Activated CD4-positive, alpha-beta T cell treated with anti-CD3 and anti-CD28 coated beads for 36 hours (primary cell): ENCODE measurements at regions of chr4 and their contacts with region 1.

Region 1: GRCh38 chr4:184250795-184251669 is 33.4 kb upstream of the ENPP6 start:
- DNase-seq: peak; percentile 36
- ATAC-seq: peak; percentile 80
- H3K4me3 Mint-ChIP-seq: no peak overlapping the region
- H3K27ac Mint-ChIP-seq: peak overlapping the region; percentile 53
- H3K4me1 Mint-ChIP-seq: peaks cover 14% of the 10 kb centered on the region
- H3K27me3 Mint-ChIP-seq: peaks cover 3% of the 10 kb centered on the region

Region 2: DNA sequence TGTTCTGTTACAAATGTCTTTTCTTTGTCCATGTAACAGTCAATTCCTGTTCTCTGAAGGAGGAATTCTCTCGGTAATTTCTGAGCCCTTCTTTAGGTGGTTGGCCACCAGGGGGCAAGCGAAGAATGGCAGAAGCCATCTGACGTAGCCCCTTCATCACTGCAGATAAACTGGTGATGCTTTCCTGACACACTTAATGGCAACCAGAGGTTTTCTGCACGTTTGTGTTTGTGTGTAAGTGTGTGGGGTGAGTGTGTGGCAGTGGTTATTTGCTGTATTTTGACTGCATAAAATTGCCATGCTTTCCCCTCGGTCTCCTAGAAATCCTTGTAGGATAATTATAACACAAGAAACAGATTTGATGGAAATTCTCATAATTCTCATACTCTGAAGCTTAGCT is 410.7 kb before region 1 on chr4:
- CTCF ChIA-PET with region 1: no interaction called
- POLR2A ChIA-PET with region 1: no interaction called
- intact Hi-C with region 1: loop called (anchors 1 to 2 kb)
- DNase-seq: peak; percentile 83
- ATAC-seq: peak; percentile 47
- H3K4me3 Mint-ChIP-seq: no peak overlapping the region
- H3K27ac Mint-ChIP-seq: no peak overlapping the region
- H3K4me1 Mint-ChIP-seq: no peaks in the 10 kb centered on the region
- H3K27me3 Mint-ChIP-seq: peaks cover 18% of the 10 kb centered on the region

Region 3: DNA sequence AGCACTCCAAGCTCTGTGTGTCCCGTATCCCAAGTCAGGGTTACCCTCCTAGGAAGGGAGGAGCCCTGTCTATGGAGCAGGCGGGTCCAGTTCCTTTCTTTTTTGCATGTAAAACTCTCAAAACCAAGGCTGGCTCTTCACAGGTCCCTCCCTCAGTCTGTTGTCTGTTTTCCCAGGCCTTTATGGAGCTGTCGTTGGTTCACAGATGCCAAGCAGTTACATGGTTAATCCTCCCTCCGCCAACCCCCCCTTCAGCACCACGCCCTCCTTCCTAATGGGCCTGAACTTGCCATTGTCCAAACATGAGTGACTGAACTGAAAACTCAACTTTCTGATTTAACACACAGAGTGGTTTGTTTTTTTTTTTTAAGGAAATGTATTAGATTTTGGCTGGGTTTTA is 197.6 kb before region 1 on chr4:
- CTCF ChIA-PET with region 1: no interaction called
- POLR2A ChIA-PET with region 1: no interaction called
- intact Hi-C with region 1: no loop called
- DNase-seq: no peak
- ATAC-seq: no peak
- H3K4me3 Mint-ChIP-seq: no peak overlapping the region
- H3K27ac Mint-ChIP-seq: no peak overlapping the region
- H3K4me1 Mint-ChIP-seq: no peaks in the 10 kb centered on the region
- H3K27me3 Mint-ChIP-seq: peaks cover 20% of the 10 kb centered on the region

Region 4: DNA sequence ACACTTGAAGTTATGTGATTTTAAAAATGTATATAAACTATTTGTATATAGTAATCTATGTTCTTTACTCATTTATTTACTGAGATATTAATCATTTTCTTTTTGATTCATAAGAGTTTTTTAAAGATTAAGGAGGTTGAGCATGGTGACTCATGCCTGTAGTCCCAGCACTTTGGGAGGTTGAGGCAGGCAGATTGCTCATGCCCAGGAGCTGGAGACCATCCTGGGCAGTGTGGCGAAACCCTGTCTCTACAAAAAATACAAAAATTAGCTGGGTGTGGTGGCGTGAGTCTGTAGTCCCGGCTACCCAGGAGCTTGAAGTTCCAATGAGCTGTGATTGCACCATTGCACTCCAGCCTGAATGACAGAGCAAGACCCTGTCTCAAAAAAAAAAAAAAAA is 176.0 kb before region 1 on chr4:
- CTCF ChIA-PET with region 1: no interaction called
- POLR2A ChIA-PET with region 1: no interaction called
- intact Hi-C with region 1: no loop called
- DNase-seq: no peak
- ATAC-seq: no peak
- H3K4me3 Mint-ChIP-seq: no peak overlapping the region
- H3K27ac Mint-ChIP-seq: no peak overlapping the region
- H3K4me1 Mint-ChIP-seq: no peaks in the 10 kb centered on the region
- H3K27me3 Mint-ChIP-seq: peaks cover 14% of the 10 kb centered on the region

Region 5: GRCh38 chr4:184100297-184100885 is 150.6 kb before region 1 on chr4:
- CTCF ChIA-PET with region 1: interaction called, 3 read pairs
- POLR2A ChIA-PET with region 1: no interaction called
- intact Hi-C with region 1: loop called in 1 of 2 experiments (anchors 1 kb)
- DNase-seq: peak; percentile 74
- ATAC-seq: peak; percentile 75
- H3K4me3 Mint-ChIP-seq: no peak overlapping the region
- H3K27ac Mint-ChIP-seq: no peak overlapping the region
- H3K4me1 Mint-ChIP-seq: peaks cover 3% of the 10 kb centered on the region
- H3K27me3 Mint-ChIP-seq: peaks cover 15% of the 10 kb centered on the region

Region 6: DNA sequence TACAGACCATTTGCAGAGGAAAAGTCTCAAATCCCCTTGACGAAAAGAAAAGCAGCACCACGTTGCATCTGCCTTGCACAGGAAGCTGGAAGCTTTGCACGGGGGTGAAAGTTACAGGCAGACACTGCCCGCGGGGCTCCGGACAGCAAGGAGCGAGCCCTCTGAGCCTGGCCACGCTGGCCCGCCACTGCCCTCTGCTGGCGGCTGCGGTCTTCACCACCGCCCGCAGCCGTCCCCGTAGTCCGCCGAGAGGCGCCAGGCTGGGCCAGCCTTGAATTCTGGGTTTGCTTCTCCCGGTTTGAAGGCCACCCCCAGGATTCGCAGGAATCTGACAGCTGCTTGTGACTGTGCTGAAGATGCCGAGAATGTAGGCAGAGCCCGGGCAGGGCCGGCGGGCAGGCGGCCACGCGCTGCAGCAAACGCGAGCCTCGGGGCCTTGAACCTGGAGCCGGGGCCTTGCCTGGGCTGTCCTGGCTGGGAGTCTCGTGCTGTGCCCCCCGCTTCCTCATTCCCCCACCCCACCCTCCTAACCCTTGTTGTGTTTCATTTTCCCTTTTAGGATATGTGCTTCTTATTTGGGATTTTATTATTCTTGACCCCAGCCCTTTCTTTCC is 82.5 kb before region 1 on chr4:
- CTCF ChIA-PET with region 1: interaction called, 5 read pairs
- POLR2A ChIA-PET with region 1: no interaction called
- intact Hi-C with region 1: loop called (anchors 1 to 2 kb)
- DNase-seq: peak; percentile 79
- ATAC-seq: peak; percentile 91
- H3K4me3 Mint-ChIP-seq: no peak overlapping the region
- H3K27ac Mint-ChIP-seq: no peak overlapping the region
- H3K4me1 Mint-ChIP-seq: peaks cover 2% of the 10 kb centered on the region
- H3K27me3 Mint-ChIP-seq: peaks cover 58% of the 10 kb centered on the region

Region 7: DNA sequence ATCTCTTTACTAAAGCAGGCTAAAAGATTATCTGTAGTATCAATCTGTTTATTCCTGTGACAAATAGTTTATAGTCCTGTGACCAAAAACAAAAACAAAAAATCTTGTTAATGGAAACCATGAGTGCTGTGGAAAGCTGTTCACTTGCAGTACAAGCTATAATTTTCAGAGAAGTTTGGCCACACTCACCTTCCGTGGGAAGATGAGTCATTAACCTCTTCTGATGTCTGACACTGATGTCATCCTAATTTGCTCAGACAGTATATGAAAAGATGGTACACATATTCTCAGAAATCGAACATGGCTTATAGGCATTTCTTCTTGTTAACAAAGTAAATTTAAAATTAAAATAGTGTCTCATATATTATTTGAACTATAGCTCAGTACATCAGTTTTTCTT is 13.4 kb before region 1 on chr4:
- CTCF ChIA-PET with region 1: interaction called, 11 read pairs
- POLR2A ChIA-PET with region 1: interaction called, 3 read pairs
- intact Hi-C with region 1: no loop called
- DNase-seq: peak; percentile 73
- ATAC-seq: peak; percentile 97
- H3K4me3 Mint-ChIP-seq: peak overlapping the region; percentile 9
- H3K27ac Mint-ChIP-seq: peak overlapping the region; percentile 84
- H3K4me1 Mint-ChIP-seq: peaks cover 28% of the 10 kb centered on the region
- H3K27me3 Mint-ChIP-seq: no peaks in the 10 kb centered on the region

Region 8: DNA sequence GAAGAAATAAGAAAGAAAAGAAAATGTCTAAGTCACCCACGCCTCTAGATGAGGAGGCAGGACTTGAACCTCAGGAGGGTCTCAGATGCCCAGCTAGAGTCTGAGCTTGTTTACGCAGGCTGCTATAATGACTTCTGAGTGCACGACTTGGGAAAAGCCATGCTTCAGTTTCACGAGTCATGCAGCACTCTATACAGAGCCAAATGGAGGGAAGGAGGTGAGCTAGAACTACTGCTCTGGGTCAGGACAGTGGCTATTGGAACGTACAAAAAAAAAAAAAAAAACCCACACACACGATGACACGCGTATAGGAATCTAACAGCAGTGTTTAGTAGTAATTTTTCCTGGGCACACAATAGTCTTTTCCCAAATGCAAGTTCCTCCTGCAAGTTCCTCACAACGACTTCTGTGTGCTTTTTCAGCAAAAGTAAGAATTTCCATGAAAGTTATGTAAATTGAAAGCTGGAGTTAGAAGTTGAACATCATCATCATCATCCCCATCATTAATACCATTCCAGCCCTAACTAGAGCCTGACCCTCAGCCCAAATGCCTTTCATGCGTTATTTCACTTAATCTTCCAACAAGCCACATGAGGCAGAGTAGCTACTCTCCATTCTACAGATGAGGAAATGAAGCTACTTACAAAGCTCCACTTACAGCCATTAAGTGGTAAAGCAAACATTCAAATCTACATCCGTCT is 186.7 kb after region 1 on chr4:
- CTCF ChIA-PET with region 1: interaction called, 3 read pairs
- POLR2A ChIA-PET with region 1: interaction called, 17 read pairs
- intact Hi-C with region 1: no loop called
- DNase-seq: no peak
- ATAC-seq: peak; percentile 37
- H3K4me3 Mint-ChIP-seq: no peak overlapping the region
- H3K27ac Mint-ChIP-seq: peak overlapping the region; percentile 39
- H3K4me1 Mint-ChIP-seq: peaks cover 58% of the 10 kb centered on the region
- H3K27me3 Mint-ChIP-seq: no peaks in the 10 kb centered on the region